Tibial artery (tissue), 4 donors: ENCODE measurements at regions of chr10 and their contacts with region 1.

Region 1: GRCh38 chr10:20399772-20400171 is 497.3 kb downstream of the NEBL start:
- DNase-seq: no peak
- H3K4me3 ChIP-seq: no peak overlapping the region
- H3K27ac ChIP-seq: no peak overlapping the region
- H3K4me1 ChIP-seq: peaks cover 0 to 17% (median 0%) of the 10 kb centered on the region in 4 donors
- H3K27me3 ChIP-seq: no peaks in the 10 kb centered on the region
- CTCF ChIP-seq: no peak

Region 2: GRCh38 chr10:21458126-21458871 is 1058.5 kb after region 1 on chr10:
- intact Hi-C with region 1: loop called (anchors 5 kb)
- DNase-seq: no peak
- H3K4me3 ChIP-seq: no peak overlapping the region
- H3K27ac ChIP-seq: no peak overlapping the region
- H3K4me1 ChIP-seq: no peaks in the 10 kb centered on the region
- H3K27me3 ChIP-seq: no peaks in the 10 kb centered on the region
- CTCF ChIP-seq: no peak